ENCODE measurements at regions of chr17 and their contacts with region 1.

Region 1: DNA sequence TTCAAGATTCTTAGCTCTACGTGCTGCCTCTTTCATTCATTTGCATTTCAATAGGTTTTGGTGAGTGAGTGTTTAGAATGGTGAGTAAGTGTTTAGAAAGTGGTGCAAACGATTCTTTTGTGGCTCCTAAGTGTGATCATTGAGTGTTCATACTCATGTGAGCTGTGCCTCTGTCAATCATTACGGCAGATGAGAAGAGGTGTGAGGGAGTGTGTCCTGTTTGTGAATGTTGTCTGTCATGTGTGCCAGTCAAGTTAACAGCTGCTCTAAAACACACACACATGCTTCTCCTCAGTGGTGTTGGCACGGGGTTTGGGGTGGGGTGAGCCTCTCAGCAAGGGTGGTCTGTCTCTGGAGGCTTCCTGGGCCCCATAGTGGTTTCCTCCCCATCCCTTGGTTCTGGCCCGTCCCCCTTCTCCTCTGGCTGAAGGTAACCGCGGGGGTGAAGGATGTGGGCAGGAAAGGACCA is 11.4 kb downstream of the MYL4 start:
- DNase-seq: peak in 7 of 9 experiments; percentile 21 to 80 (median 51)
- ATAC-seq: peak; percentile 72
- H3K4me3 ChIP-seq: no peak overlapping the region
- H3K4me3 Mint-ChIP-seq: peak overlapping the region; percentile 10
- H3K27ac ChIP-seq: peak overlapping the region in 1 of 2 experiments; percentile 63
- H3K27ac Mint-ChIP-seq: peak overlapping the region; percentile 60
- H3K4me1 ChIP-seq: peaks cover 52% of the 10 kb centered on the region
- H3K4me1 Mint-ChIP-seq: peaks cover 43% of the 10 kb centered on the region
- H3K27me3 ChIP-seq: no peaks in the 10 kb centered on the region
- H3K27me3 Mint-ChIP-seq: no peaks in the 10 kb centered on the region
- CTCF ChIP-seq: no peak

Region 2: GRCh38 chr17:46995841-46996571 is 224.6 kb before region 1 on chr17:
- CTCF ChIA-PET with region 1: no interaction called
- POLR2A ChIA-PET with region 1: no interaction called
- intact Hi-C with region 1: no loop called
- DNase-seq: no peak
- ATAC-seq: no peak
- H3K4me3 ChIP-seq: no peak overlapping the region
- H3K4me3 Mint-ChIP-seq: no peak overlapping the region
- H3K27ac ChIP-seq: no peak overlapping the region
- H3K27ac Mint-ChIP-seq: no peak overlapping the region
- H3K4me1 ChIP-seq: peaks cover 1% of the 10 kb centered on the region
- H3K4me1 Mint-ChIP-seq: no peaks in the 10 kb centered on the region
- H3K27me3 ChIP-seq: no peaks in the 10 kb centered on the region
- H3K27me3 Mint-ChIP-seq: no peaks in the 10 kb centered on the region
- CTCF ChIP-seq: no peak

Region 3: DNA sequence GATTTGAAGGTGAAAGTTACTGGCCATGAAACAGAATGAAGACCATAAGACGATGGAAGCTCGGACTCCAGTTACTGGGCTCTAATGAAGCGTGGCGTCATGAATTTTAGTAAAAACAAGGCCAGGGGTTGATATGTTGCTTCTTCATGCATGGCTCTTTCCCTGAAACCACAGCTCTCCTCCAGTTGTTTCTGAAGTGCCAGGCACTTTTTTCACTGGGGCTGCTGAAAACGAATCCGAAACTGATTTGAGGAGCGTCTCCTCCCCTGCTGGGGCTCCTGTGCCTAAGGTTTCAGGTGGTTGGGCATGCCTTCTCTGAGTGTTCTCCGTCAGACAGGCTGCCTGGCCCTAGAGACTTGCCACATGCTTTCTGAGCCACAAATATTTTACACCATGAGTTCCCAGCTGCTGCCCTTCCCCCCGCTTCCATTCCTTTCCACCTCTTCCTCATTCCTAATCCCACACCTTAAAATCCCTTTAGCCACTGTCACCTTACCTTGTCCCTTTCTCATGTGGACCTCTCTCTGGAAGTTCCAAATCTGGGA is 15.1 kb before region 1 on chr17:
- CTCF ChIA-PET with region 1: interaction called, 4 read pairs
- POLR2A ChIA-PET with region 1: interaction called, 7 read pairs
- intact Hi-C with region 1: loop called (anchors 1 to 2 kb)
- DNase-seq: peak; percentile 25 to 89 (median 67)
- ATAC-seq: peak; percentile 72
- H3K4me3 ChIP-seq: peak overlapping the region; percentile 18 to 44
- H3K4me3 Mint-ChIP-seq: peak overlapping the region; percentile 73
- H3K27ac ChIP-seq: peak overlapping the region; percentile 48 to 95
- H3K27ac Mint-ChIP-seq: peak overlapping the region; percentile 97
- H3K4me1 ChIP-seq: peaks cover 31% of the 10 kb centered on the region
- H3K4me1 Mint-ChIP-seq: peaks cover 49% of the 10 kb centered on the region
- H3K27me3 ChIP-seq: no peaks in the 10 kb centered on the region
- H3K27me3 Mint-ChIP-seq: no peaks in the 10 kb centered on the region
- CTCF ChIP-seq: no peak

Region 4: DNA sequence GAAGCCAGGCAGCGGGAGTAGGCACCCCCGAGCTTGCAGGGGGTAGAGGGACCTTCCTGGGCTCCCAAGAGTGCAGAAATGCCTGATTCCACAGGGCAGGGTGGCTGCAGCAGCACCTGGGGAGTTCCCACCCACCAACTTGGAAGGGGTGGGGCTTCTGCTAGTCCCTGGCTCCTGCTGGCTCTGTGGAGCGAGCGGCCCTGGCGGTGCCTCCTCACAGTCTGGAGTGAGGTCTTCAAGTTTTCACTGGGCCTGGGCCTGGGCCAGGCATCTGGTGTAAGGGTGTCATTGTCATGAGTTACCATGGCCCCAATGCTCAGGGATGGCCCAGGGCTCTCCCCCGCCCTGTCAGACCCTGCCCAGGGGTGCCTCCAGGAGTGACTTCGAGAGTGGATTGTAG is 17.3 kb after region 1 on chr17:
- CTCF ChIA-PET with region 1: no interaction called
- POLR2A ChIA-PET with region 1: no interaction called
- intact Hi-C with region 1: no loop called
- DNase-seq: no peak
- ATAC-seq: no peak
- H3K4me3 ChIP-seq: no peak overlapping the region
- H3K4me3 Mint-ChIP-seq: no peak overlapping the region
- H3K27ac ChIP-seq: no peak overlapping the region
- H3K27ac Mint-ChIP-seq: no peak overlapping the region
- H3K4me1 ChIP-seq: no peaks in the 10 kb centered on the region
- H3K4me1 Mint-ChIP-seq: peaks cover 7% of the 10 kb centered on the region
- H3K27me3 ChIP-seq: no peaks in the 10 kb centered on the region
- H3K27me3 Mint-ChIP-seq: peaks cover 2% of the 10 kb centered on the region
- CTCF ChIP-seq: no peak